ENCODE measurements at regions of chr17 and their contacts with region 1.

Region 1: DNA sequence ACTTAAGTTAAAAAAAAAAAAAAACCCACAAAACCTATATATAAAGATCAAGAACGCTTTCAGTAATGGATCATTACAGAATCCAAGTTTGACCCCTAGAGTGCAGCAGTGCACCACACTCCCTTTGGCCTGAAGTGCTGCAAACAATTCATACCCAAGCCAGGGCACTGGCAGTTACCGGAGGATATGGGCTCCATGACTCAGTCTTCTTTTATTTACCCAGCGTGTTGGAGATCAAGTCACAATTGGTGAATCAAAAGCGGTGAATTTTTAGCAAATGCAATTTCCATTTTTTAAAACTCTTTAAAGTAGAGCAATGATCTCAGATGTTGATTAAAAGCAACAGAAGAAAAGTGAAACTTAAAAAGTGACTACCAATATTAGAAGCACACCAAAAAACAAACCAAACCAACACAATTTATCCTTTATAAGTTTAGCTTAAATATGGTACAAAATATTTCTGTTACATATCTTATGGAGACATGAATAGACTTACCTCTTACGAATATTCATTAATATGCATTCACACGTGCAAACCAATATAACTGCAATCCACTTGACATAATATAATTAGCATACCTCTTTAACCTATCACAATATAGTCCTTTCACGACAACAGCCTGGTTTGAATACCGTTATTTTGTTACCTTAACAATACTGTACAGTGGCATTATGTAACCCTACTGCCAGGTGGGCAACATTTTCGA is 46.3 kb downstream of the ZNF652 start:
- DNase-seq: peak; percentile 84
- ATAC-seq: peak; percentile 95
- H3K4me3 ChIP-seq: peak overlapping the region in 1 of 5 experiments; percentile 20
- H3K4me3 Mint-ChIP-seq: peak overlapping the region; percentile 87
- H3K27ac ChIP-seq: peak overlapping the region in 1 of 2 donors; percentile 74
- H3K27ac Mint-ChIP-seq: peak overlapping the region; percentile 86
- H3K4me1 ChIP-seq: peaks cover 21 to 22% of the 10 kb centered on the region in 2 donors
- H3K4me1 Mint-ChIP-seq: peaks cover 26% of the 10 kb centered on the region
- H3K27me3 ChIP-seq: no peaks in the 10 kb centered on the region
- H3K27me3 Mint-ChIP-seq: no peaks in the 10 kb centered on the region
- CTCF ChIP-seq: peak; percentile 97

Region 2: GRCh38 chr17:49327835-49328784 is 12.4 kb after region 1 on chr17:
- CTCF ChIA-PET with region 1: interaction called, 13 read pairs
- POLR2A ChIA-PET with region 1: no interaction called
- intact Hi-C with region 1: no loop called
- DNase-seq: peak; percentile 60
- ATAC-seq: peak; percentile 77
- H3K4me3 ChIP-seq: no peak overlapping the region
- H3K4me3 Mint-ChIP-seq: peak overlapping the region; percentile 4
- H3K27ac ChIP-seq: peak overlapping the region; percentile 15 to 76
- H3K27ac Mint-ChIP-seq: peak overlapping the region; percentile 85
- H3K4me1 ChIP-seq: peaks cover 15 to 16% of the 10 kb centered on the region in 2 donors
- H3K4me1 Mint-ChIP-seq: peaks cover 57% of the 10 kb centered on the region
- H3K27me3 ChIP-seq: no peaks in the 10 kb centered on the region
- H3K27me3 Mint-ChIP-seq: no peaks in the 10 kb centered on the region
- CTCF ChIP-seq: no peak

Region 3: DNA sequence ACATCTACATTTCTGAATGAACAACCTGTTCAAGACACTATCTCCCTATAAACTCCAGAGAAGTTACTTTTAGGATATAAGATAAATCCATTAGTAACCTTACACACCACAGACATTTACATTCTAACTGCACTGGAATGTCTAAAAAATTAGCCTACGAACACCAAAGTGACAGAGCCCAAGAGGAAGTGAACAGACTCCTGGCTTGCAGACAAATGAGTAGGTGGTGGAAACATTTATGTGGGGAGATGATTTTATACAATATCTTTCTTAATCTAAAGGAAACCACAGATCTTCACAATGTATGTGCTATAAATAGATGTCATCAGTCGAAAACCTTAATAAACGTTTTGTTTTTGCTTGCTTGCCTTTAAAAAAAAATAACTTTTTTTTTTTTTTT is 27.6 kb after region 1 on chr17:
- CTCF ChIA-PET with region 1: interaction called, 20 read pairs
- POLR2A ChIA-PET with region 1: interaction called, 8 read pairs
- intact Hi-C with region 1: loop called (anchors 1 kb)
- DNase-seq: peak; percentile 30
- ATAC-seq: peak; percentile 24
- H3K4me3 ChIP-seq: no peak overlapping the region
- H3K4me3 Mint-ChIP-seq: peak overlapping the region; percentile 79
- H3K27ac ChIP-seq: peak overlapping the region in 1 of 2 donors; percentile 84
- H3K27ac Mint-ChIP-seq: peak overlapping the region; percentile 47
- H3K4me1 ChIP-seq: peaks cover 31 to 41% of the 10 kb centered on the region in 2 donors
- H3K4me1 Mint-ChIP-seq: peaks cover 54% of the 10 kb centered on the region
- H3K27me3 ChIP-seq: no peaks in the 10 kb centered on the region
- H3K27me3 Mint-ChIP-seq: no peaks in the 10 kb centered on the region
- CTCF ChIP-seq: no peak

Region 4: DNA sequence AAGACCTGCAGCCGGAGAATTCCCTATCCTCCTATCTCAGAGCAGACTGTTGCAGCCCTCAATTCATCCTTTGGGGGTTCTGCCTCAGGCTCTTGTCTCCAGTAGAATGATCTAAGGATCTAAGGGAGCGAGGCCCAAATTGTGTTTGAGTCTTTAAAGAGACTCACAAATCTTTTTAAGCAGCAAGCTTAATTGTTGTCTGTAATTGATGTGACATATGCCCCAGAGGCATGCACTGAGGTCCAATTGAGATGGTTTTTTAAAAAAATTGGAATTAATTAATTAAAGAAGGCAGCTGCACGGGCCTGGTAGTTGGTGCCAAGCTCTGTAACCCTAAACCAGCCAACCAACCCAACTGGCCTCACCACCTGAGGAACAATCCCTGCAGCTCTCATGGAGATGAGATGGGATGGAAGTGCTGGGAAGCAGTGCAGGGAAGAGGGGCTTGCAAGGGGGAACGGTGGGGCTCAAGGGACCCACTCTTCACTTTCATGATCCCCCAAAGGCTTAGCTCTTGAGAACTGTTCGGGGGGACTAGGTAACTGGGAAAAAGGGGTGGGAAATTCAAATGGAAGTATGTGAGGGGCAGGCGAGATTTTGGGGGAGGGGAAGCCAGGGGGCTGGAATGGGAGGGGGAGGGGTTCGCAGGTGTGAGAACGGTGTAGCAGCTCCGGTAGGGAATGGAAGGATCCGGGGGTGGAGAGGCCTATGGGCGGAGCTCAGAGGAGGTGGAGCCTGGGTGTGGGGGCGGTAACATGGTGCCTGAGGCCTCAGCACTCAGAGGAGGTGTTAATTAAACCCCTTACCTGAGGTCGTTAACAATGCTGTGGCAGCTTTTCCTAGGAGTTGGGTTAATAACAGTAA is 55.5 kb after region 1 on chr17:
- CTCF ChIA-PET with region 1: interaction called, 114 read pairs
- POLR2A ChIA-PET with region 1: no interaction called
- intact Hi-C with region 1: loop called (anchors 1 kb)
- DNase-seq: no peak
- ATAC-seq: no peak
- H3K4me3 ChIP-seq: no peak overlapping the region
- H3K4me3 Mint-ChIP-seq: no peak overlapping the region
- H3K27ac ChIP-seq: peak overlapping the region; percentile 2 to 52
- H3K27ac Mint-ChIP-seq: peak overlapping the region; percentile 32
- H3K4me1 ChIP-seq: peaks cover 40 to 41% of the 10 kb centered on the region in 2 donors
- H3K4me1 Mint-ChIP-seq: peaks cover 61% of the 10 kb centered on the region
- H3K27me3 ChIP-seq: no peaks in the 10 kb centered on the region
- H3K27me3 Mint-ChIP-seq: no peaks in the 10 kb centered on the region
- CTCF ChIP-seq: no peak

Region 5: DNA sequence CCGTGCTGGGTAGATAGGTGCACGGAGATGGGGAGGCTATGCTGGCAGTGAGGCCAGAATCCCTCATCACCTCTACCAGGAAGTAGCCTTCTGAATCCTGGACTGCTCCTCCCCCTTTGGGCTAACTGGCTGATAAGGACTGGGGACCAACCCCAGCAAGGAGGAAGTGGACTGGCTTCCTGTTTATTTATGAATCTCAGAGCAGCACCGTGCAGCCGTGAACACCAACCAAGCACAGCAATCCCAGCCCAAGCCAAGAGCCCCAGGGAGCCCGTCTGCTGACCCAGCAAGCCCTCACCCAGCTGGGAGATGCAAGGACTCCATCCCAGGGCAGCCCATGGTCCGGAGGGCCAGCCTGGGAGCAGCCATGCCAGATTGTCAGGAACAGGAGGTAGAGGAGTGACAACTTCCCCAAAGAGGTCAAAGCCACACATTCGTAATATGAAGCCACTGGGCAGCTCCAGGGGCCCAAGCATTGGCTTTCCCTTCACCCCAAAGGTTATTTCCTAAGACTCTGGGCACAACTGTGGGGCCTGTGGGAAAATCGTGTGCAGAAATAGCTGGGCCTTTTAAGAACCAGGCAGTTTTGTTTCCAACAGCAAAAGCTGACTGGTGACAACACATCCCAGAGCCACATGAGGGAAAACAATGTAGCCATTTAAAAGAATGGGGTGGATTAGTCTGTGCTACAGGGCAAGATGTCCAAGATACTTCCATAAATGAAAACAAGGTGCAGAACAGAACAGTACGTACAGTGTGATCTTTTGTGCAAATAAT is 75.0 kb after region 1 on chr17:
- CTCF ChIA-PET with region 1: interaction called, 368 read pairs
- POLR2A ChIA-PET with region 1: interaction called, 7 read pairs
- intact Hi-C with region 1: loop called (anchors 1 kb)
- DNase-seq: peak; percentile 68
- ATAC-seq: peak; percentile 46
- H3K4me3 ChIP-seq: peak overlapping the region in 2 of 5 experiments; percentile 8 to 49
- H3K4me3 Mint-ChIP-seq: peak overlapping the region; percentile 89
- H3K27ac ChIP-seq: peak overlapping the region; percentile 84 to 92
- H3K27ac Mint-ChIP-seq: peak overlapping the region; percentile 99
- H3K4me1 ChIP-seq: peaks cover 69 to 78% of the 10 kb centered on the region in 2 donors
- H3K4me1 Mint-ChIP-seq: peaks cover 65% of the 10 kb centered on the region
- H3K27me3 ChIP-seq: no peaks in the 10 kb centered on the region
- H3K27me3 Mint-ChIP-seq: no peaks in the 10 kb centered on the region
- CTCF ChIP-seq: no peak

Region 6: GRCh38 chr17:49556223-49556971 is 240.7 kb after region 1 on chr17:
- CTCF ChIA-PET with region 1: interaction called, 30 read pairs
- POLR2A ChIA-PET with region 1: no interaction called
- intact Hi-C with region 1: loop called (anchors 2 kb)
- DNase-seq: peak; percentile 85
- ATAC-seq: peak; percentile 94
- H3K4me3 ChIP-seq: no peak overlapping the region
- H3K4me3 Mint-ChIP-seq: no peak overlapping the region
- H3K27ac ChIP-seq: no peak overlapping the region
- H3K27ac Mint-ChIP-seq: no peak overlapping the region
- H3K4me1 ChIP-seq: peaks cover 0 to 6% of the 10 kb centered on the region in 2 donors
- H3K4me1 Mint-ChIP-seq: peaks cover 1% of the 10 kb centered on the region
- H3K27me3 ChIP-seq: peaks cover 0 to 7% (median 0%) of the 10 kb centered on the region in 4 experiments
- H3K27me3 Mint-ChIP-seq: peaks cover 5% of the 10 kb centered on the region
- CTCF ChIP-seq: peak; percentile 98